MCF 10A (cell line): ENCODE measurements at regions of chr1 and their contacts with region 1.

Region 1: DNA sequence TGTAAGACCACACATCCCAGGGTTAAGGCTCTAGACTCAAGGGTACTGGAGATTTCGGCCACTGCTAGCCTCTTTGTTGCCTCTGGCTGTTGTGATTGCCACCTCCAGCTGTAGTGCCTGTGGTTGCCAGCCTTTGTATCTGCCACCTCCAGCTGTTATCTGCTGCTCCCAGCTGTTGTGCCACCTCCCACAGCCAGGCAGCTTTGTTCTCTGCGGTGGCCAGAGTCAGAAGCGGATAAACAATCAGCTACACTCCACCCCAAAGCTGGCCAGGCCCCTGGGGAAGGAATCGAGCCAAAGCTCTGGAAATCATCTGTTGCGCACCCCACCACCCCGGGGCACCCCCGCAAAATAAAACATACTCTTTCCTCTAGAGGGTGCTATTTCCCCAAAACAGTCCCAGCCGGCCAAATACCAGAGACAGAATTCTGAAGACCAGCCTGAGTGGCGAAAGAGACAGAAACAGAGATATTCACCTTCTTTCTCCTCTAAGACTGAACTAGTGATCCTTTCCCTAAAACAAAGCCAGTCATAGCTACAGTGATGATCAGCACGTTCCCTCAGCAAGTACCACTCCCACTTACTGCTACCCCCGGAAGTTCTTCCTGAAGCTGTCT is 14.8 kb upstream of the PIGM start:
- DNase-seq: peak; percentile 73
- H3K4me3 Mint-ChIP-seq: no peak overlapping the region
- H3K27ac Mint-ChIP-seq: no peak overlapping the region
- H3K4me1 Mint-ChIP-seq: peaks cover 16% of the 10 kb centered on the region
- H3K27me3 Mint-ChIP-seq: peaks cover 63% of the 10 kb centered on the region
- CTCF ChIP-seq: peak; percentile 83

Region 2: DNA sequence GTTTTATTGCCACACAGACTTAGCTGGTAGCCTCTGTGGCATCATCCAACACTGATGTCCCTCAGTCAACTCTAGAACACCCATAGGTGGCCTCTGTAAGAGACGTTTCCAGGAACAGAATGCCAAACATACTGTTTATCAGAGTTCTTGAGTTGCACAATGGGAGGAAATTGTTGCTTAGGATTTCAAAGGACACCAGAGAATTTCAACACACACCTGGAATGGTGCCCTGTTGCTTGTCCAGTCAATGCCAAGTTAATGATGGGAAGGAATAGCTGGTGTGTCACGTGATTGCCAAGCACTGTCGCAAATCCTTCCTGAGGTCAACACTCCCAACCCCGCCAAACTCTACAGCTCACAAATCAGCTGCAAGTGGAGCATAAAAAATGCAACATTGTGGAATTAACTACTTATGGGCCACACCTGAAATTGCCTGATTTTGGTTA is 294.4 kb before region 1 on chr1:
- CTCF ChIA-PET with region 1: no interaction called
- POLR2A ChIA-PET with region 1: no interaction called
- intact Hi-C with region 1: no loop called
- DNase-seq: peak; percentile 100
- H3K4me3 Mint-ChIP-seq: no peak overlapping the region
- H3K27ac Mint-ChIP-seq: peak overlapping the region; percentile 78
- H3K4me1 Mint-ChIP-seq: peaks cover 44% of the 10 kb centered on the region
- H3K27me3 Mint-ChIP-seq: no peaks in the 10 kb centered on the region
- CTCF ChIP-seq: no peak

Region 3: GRCh38 chr1:160018900-160019299 is 27.7 kb before region 1 on chr1:
- CTCF ChIA-PET with region 1: interaction called, 26 read pairs
- POLR2A ChIA-PET with region 1: interaction called, 3 read pairs
- intact Hi-C with region 1: no loop called
- DNase-seq: peak; percentile 67
- H3K4me3 Mint-ChIP-seq: no peak overlapping the region
- H3K27ac Mint-ChIP-seq: no peak overlapping the region
- H3K4me1 Mint-ChIP-seq: peaks cover 27% of the 10 kb centered on the region
- H3K27me3 Mint-ChIP-seq: no peaks in the 10 kb centered on the region
- CTCF ChIP-seq: no peak

Region 4: GRCh38 chr1:160058087-160058486 is 11.5 kb after region 1 on chr1:
- CTCF ChIA-PET with region 1: interaction called, 1,546 read pairs
- POLR2A ChIA-PET with region 1: interaction called, 12 read pairs
- intact Hi-C with region 1: no loop called
- DNase-seq: peak; percentile 32
- H3K4me3 Mint-ChIP-seq: no peak overlapping the region
- H3K27ac Mint-ChIP-seq: no peak overlapping the region
- H3K4me1 Mint-ChIP-seq: peaks cover 12% of the 10 kb centered on the region
- H3K27me3 Mint-ChIP-seq: peaks cover 63% of the 10 kb centered on the region
- CTCF ChIP-seq: no peak

Region 5: DNA sequence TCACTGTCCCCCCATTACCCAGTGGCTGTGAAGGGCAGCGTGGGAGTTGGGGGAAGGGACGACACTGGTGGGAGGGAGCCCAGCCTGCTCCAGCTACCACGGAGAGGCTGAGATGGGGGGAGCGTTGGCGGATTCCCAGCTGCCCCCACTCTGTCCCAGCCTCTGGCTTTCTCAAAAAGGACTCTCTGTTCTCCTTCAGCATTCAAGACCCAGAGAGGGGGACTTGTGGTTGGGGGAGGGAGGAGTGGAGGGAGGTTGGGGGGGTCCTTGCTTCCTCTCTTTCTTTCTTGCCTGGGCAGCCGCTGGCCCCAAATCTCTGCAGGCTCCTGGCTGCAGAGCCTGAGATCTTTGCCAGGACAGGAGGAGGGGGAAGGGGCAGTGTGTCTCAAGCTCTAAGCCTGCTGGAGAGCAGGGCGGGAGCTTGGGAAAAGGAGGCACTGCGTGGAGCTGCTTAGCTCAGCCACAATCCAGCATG is 71.1 kb after region 1 on chr1:
- CTCF ChIA-PET with region 1: interaction called, 10 read pairs
- POLR2A ChIA-PET with region 1: no interaction called
- intact Hi-C with region 1: no loop called
- DNase-seq: peak; percentile 30
- H3K4me3 Mint-ChIP-seq: no peak overlapping the region
- H3K27ac Mint-ChIP-seq: no peak overlapping the region
- H3K4me1 Mint-ChIP-seq: peaks cover 8% of the 10 kb centered on the region
- H3K27me3 Mint-ChIP-seq: no peaks in the 10 kb centered on the region
- CTCF ChIP-seq: no peak